ENCODE measurements at regions of chr9 and their contacts with region 1.

Region 1: DNA sequence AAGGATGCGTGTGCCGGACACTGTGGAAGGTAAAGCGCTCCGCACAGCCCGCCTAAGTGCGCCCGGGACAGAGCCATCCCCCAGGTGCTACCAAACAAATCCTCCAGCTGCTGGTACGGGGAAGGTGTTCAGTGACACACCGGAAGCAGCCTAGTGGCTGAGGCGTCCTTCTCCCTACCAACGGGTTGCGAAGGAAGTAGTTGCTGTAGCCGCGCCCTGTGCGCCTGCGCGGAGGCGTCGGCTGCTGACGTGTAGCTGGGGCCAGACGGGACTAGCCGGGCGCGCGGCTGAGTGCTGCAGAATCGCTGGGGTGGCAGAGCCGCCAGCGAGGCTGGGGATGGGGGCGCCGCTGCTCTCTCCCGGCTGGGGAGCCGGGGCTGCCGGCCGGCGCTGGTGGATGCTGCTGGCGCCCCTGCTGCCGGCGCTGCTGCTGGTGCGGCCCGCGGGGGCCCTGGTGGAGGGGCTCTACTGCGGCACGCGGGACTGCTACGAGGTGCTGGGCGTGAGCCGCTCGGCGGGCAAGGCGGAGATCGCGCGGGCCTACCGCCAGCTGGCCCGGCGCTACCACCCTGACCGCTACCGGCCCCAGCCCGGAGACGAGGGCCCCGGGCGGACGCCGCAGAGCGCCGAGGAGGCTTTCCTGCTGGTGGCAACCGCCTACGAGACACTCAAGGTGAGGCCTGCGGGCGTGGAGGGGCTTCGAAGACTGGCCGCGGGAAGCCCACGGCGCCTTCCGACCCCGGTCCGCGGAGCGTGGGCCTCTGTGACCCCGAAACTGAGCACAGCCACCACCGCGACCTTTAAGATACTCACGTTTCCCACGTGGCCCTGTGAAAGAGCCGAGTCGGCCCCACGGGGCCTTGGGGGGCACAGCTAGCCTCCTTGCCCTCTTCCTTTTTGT is at the start of gene DNAJC25:
- DNase-seq: peak; percentile 97
- H3K4me3 Mint-ChIP-seq: peak within 1 kb of the TSS; percentile 98
- H3K27ac Mint-ChIP-seq: peak within 1 kb of the TSS; percentile 93
- H3K4me1 Mint-ChIP-seq: peaks cover 54% of the 10 kb centered on the region
- H3K27me3 Mint-ChIP-seq: peaks cover 3% of the 10 kb centered on the region
- total RNA-seq, gene DNAJC25: 5.8 and 6.1 TPM in 2 replicates

Region 2: DNA sequence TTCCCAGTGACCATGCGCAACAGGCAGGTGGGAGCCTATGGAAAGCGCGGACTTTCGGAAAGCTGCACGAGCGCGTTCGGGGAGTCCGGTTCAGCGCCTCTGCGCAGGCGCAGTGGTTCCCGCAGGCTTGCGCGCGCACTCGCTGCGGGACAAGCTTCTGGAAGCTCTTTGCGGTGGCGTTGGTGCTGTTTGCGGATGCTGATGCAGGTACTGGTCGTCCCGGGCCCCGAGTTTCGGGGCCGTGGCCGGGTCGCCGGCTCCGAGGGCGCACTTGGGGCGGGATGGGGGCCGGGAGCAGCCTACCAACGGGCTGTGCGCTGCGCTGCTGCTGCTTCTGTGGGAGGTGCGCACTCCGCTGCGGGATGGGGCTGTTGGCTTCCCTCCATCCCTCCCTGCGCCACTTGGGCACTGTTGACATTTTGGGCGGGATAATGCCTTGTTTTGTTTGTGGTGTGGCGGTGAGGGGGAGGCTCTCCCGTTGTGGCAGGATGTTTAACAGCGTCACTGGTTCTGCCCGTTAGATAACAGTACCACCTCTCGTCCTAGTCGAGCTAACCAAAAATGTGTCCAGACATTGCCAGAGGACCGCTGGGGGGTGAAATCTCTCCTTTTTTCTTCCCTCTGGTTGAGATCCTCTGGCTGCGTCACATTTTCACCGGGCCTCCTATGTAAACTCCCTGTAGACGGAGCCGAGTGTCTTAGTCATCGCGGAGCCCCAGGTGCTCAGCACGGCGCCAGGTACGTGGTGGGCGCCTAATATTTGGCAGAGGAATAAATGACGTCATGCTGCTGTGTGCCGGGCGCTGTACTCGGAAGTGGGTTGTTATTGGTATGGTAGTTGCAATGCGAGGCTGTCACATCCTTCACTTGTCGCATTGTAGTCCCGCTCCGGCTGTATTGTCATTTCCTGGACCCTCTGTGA is 106.0 kb before region 1 on chr9 and contains the start of gene ZNF483:
- intact Hi-C with region 1: loop called (anchors 2 kb)
- DNase-seq: peak; percentile 61
- H3K4me3 Mint-ChIP-seq: peak within 1 kb of the TSS; percentile 88
- H3K27ac Mint-ChIP-seq: peak within 1 kb of the TSS; percentile 81
- H3K4me1 Mint-ChIP-seq: peaks cover 20% of the 10 kb centered on the region
- H3K27me3 Mint-ChIP-seq: peaks cover 4% of the 10 kb centered on the region
- total RNA-seq, gene ZNF483: 2.4 and 3.5 TPM in 2 replicates

Region 3: GRCh38 chr9:111597817-111598729 is 33.2 kb before region 1 on chr9:
- intact Hi-C with region 1: loop called (anchors 1 kb)
- DNase-seq: peak; percentile 35
- H3K4me3 Mint-ChIP-seq: peak overlapping the region; percentile 83
- H3K27ac Mint-ChIP-seq: no peak overlapping the region
- H3K4me1 Mint-ChIP-seq: peaks cover 24% of the 10 kb centered on the region
- H3K27me3 Mint-ChIP-seq: peaks cover 33% of the 10 kb centered on the region

Region 4: DNA sequence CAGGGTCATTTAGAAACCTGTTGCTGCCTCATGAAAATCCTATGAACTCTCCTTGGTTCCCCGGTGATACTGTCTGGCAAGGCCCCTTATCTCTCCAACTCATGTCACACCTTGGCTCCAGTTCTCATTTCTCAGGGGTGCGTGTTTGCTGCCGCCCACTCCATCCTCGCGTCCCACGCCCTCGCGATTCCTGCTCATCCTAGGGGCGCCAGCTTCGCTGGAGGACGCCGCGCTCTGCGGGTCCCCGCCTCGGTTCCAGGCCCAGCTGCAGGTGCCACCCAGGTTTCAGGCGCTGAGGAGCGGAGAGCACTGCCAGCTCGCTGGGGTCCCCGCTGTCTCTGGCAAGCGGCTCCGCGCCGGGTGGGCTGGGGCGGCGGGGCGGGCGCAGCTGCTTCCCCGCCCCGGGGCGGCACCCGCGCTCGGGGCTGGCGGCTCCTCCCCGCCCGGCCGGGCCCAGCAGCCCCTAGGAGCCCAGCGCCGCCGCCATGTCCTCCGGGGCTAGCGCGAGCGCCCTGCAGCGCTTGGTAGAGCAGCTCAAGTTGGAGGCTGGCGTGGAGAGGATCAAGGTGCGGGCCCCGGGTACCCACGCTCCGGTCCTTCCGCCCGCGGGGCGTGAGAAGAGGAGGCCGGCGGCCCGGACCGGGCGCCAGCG is 30.0 kb after region 1 on chr9 and contains the start of gene GNG10:
- intact Hi-C with region 1: loop called (anchors 1 kb)
- DNase-seq: peak; percentile 66
- H3K4me3 Mint-ChIP-seq: peak within 1 kb of the TSS; percentile 89
- H3K27ac Mint-ChIP-seq: peak within 1 kb of the TSS; percentile 89
- H3K4me1 Mint-ChIP-seq: peaks cover 34% of the 10 kb centered on the region
- H3K27me3 Mint-ChIP-seq: no peaks in the 10 kb centered on the region
- total RNA-seq, gene GNG10: 30.7 and 35.4 TPM in 2 replicates

Region 5: DNA sequence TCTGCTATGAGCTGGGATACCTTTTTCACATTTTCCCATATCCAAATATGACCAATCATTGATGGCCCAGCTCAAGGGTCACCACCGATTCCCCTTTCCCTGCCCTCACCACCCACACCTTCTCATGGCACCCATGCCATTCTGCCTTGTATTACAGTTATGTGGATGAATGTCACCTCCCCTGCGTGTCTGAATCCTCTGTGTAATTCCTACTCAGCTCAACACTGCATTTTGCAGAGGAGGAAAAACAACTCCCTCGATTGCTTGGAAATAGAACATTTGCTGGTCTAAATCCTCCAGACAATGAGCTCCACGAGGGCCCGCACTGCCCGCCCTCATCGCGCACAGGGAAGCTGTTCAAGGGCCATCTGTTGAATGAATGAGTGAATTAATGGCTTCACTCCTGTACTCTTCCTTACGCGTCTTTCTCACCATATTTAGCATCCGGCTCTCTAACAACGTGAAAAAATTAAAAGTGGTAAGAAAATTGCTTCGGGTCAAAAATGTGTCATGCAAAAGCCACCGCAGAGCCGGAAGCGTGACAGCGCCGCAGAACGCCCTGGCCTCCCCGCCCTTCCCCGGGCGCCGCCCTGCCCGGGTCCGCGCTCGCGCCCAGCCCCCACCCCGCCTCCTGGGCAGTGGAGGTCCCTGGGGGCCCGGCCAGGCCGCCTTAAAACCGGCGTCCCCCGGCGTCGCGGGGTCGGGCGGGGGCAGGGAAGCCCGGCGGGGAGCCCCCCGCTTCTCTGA is 543.1 kb after region 1 on chr9:
- intact Hi-C with region 1: loop called (anchors 10 kb)
- DNase-seq: peak; percentile 73
- H3K4me3 Mint-ChIP-seq: peak overlapping the region; percentile 88
- H3K27ac Mint-ChIP-seq: peak overlapping the region; percentile 93
- H3K4me1 Mint-ChIP-seq: peaks cover 74% of the 10 kb centered on the region
- H3K27me3 Mint-ChIP-seq: peaks cover 1% of the 10 kb centered on the region

Measured in activated T-helper 1 cell treated with anti-CD3 and anti-CD28 coated beads, Interleukin-12 subunit alpha, Interleukin-12 subunit beta, Interleukin-2, Interleukin-4 antibody, amounts not matched to agents 30 ng/mL and 10 ng/mL and 1 ng/mL, durations not matched to agents 14 hours and 24 hours and 36 hours (primary cell).